CD8-positive, alpha-beta T cell (primary cell): ENCODE measurements at regions of chr16 and their contacts with region 1.

Region 1: DNA sequence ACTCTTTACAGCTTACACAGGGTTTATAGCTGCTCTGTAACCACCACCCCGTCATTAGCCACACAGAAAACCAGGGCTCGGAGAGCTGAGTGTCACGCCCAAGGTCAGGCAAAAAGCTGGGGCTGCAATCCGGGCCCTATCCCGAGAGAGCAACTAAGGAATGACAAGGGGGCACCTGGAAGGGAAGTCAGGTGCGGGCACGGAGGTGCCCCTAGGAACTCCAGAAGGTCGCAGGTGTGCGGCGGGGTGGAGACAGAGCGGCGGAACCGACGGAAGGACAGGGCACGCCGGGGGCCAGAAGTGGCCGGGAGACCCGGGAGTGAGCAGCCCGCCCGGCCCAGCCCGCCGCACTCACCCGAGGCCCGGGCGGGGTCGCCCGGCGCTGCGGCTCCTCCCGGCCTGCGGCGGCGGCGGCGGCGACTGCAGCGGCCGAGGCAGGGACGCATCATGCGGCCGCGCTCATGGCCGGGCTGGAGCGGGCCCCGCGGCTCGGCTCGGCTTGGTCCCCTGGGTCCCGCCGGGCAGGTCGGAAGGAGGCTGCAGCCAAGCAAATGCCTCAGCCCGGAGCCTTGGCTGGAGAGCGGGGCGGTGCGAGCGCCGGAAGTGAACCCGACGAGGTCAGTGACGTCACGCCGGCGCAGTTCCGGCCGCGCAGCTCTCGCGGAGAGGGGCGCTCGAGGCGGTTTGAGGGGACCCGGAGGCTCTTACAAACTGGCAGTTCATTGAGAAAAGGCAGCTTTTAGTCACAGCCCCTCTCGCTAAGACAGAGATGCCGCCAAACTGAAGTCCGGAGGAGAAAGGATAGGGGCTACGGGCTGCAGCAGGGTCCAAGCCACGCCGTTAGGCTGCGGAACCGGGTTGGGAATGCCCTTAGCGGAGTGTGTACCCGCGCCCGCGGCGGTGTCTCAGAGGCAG is at the start of gene ZDHHC7:
- DNase-seq: peak; percentile 75 to 94 (median 88)
- ATAC-seq: peak; percentile 88
- H3K4me3 ChIP-seq: peak within 1 kb of the TSS; percentile 69 to 99
- H3K4me3 Mint-ChIP-seq: peak within 1 kb of the TSS; percentile 99
- H3K27ac ChIP-seq: peak within 1 kb of the TSS; percentile 94 to 100
- H3K27ac Mint-ChIP-seq: peak within 1 kb of the TSS; percentile 99
- H3K4me1 ChIP-seq: peaks cover 32% of the 10 kb centered on the region
- H3K4me1 Mint-ChIP-seq: peaks cover 48% of the 10 kb centered on the region
- H3K27me3 ChIP-seq: no peaks in the 10 kb centered on the region
- H3K27me3 Mint-ChIP-seq: peaks cover 2% of the 10 kb centered on the region
- CTCF ChIP-seq: no peak
- total RNA-seq, gene ZDHHC7: 85.4 to 92.1 TPM

Region 2: GRCh38 chr16:85055503-85056210 is 44.5 kb after region 1 on chr16:
- CTCF ChIA-PET with region 1: interaction called, 5 read pairs
- POLR2A ChIA-PET with region 1: interaction called, 24 read pairs
- intact Hi-C with region 1: loop called (anchors 1 kb)
- DNase-seq: peak; percentile 47 to 96 (median 77)
- ATAC-seq: peak; percentile 88
- H3K4me3 ChIP-seq: peak overlapping the region; percentile 30 to 33
- H3K4me3 Mint-ChIP-seq: peak overlapping the region; percentile 69
- H3K27ac ChIP-seq: peak overlapping the region; percentile 52 to 82
- H3K27ac Mint-ChIP-seq: peak overlapping the region; percentile 94
- H3K4me1 ChIP-seq: peaks cover 42% of the 10 kb centered on the region
- H3K4me1 Mint-ChIP-seq: peaks cover 67% of the 10 kb centered on the region
- H3K27me3 ChIP-seq: peaks cover 0 to 2% of the 10 kb centered on the region in 2 experiments
- H3K27me3 Mint-ChIP-seq: no peaks in the 10 kb centered on the region
- CTCF ChIP-seq: no peak

Region 3: GRCh38 chr16:85428168-85428898 is 417.1 kb after region 1 on chr16:
- CTCF ChIA-PET with region 1: no interaction called
- POLR2A ChIA-PET with region 1: no interaction called
- intact Hi-C with region 1: no loop called
- DNase-seq: peak in 8 of 9 experiments; percentile 29 to 66 (median 53)
- ATAC-seq: peak; percentile 83
- H3K4me3 ChIP-seq: no peak overlapping the region
- H3K4me3 Mint-ChIP-seq: no peak overlapping the region
- H3K27ac ChIP-seq: no peak overlapping the region
- H3K27ac Mint-ChIP-seq: no peak overlapping the region
- H3K4me1 ChIP-seq: no peaks in the 10 kb centered on the region
- H3K4me1 Mint-ChIP-seq: no peaks in the 10 kb centered on the region
- H3K27me3 ChIP-seq: no peaks in the 10 kb centered on the region
- H3K27me3 Mint-ChIP-seq: peaks cover 2% of the 10 kb centered on the region
- CTCF ChIP-seq: peak; percentile 40